ENCODE measurements at regions of chr22 and their contacts with region 1.

Region 1: DNA sequence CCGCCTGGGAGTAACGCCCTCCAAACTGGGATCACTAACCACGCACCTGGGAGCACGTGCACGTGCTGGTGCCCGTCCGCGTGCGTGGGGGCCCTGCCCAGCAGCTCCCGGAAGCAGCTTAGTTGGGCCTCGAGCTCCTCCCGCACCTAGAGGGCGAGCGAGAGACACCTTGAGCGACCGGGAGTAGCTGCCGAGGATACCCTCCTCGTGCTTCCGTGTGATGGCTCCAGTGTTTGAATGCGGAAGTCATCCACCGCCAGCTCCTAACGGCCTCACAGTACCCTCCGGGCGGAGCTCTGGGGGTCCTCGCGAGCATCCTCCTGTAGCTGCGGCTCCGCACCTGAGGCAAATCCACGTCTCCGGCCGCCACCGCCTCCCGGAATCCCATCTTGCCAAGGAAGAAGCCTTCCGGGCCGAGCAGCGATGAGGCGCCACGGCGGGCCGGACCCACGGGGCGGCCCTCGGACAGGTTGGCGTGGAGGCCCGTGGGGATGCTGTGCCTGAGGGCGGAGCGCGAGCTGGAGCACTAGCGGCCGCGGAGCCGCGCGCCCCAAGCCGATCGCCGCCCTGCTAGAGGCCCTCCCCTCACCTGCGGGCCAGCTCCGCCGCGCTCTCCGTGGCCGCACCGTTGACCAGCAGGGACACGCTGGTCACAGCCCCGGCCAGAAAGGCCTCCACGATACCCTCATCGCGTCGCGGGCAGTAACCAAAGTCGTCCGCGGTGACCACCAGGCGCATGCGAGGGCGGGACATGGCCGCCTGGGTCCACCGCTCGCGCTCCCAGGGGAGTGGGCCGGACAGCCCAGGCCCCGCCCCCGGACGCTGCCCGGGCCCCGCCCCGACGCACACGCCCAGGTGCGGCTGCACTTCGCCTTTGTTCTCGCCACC is at the start of gene YDJC:
- DNase-seq: peak; percentile 90 to 98 (median 94)
- ATAC-seq: peak; percentile 81
- H3K4me3 ChIP-seq: peak within 1 kb of the TSS; percentile 97
- H3K4me3 Mint-ChIP-seq: peak within 1 kb of the TSS; percentile 97
- H3K27ac ChIP-seq: peak within 1 kb of the TSS; percentile 87 to 96
- H3K27ac Mint-ChIP-seq: peak within 1 kb of the TSS; percentile 88
- H3K4me1 ChIP-seq: peaks cover 61% of the 10 kb centered on the region
- H3K4me1 Mint-ChIP-seq: peaks cover 50% of the 10 kb centered on the region
- H3K27me3 ChIP-seq: no peaks in the 10 kb centered on the region
- H3K27me3 Mint-ChIP-seq: no peaks in the 10 kb centered on the region
- CTCF ChIP-seq: no peak
- total RNA-seq, gene YDJC: 23.9 to 25.2 TPM

Region 2: DNA sequence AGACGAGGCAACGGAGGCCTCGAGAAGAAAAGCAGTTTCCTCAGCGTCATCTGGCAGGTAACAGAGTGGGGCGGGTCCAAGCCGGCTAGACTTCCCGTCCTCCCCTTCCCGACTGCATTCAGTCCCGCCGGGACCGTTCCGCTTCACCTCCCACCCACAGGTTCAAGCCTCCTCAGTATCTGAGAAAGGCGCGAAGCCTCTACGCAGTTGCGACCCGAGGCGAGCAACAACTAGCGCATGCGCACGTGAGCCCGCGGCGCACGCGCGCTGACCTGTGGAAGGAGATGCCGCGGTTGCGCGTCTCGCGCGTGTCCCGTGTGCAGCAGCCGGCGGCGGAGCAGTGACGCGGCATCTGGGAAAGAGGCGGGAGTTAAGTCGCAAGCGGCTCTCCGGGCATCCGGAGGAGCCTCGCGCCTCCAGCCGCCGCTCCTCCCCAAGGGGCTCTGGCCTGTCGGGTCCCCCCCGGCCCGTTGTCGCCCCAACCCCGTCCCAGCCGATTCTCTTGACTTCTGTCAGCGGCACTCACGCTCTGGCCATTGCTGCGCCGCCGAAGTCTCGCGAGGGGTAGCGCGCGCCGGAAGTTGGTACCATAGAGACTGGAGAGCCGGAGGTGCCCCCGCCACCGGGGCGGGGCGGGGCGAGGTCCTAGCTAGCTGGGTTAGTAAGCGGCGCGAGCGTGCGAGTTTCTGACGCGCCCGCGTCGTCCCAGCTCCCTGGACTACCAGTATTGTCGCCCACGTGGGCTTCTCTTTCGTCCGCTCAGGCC is 627.8 kb before region 1 on chr22 and contains the start of gene THAP7:
- CTCF ChIA-PET with region 1: interaction called, 4 read pairs
- POLR2A ChIA-PET with region 1: interaction called, 15 read pairs
- intact Hi-C with region 1: loop called in 1 of 2 experiments (anchors 5 kb)
- DNase-seq: peak; percentile 94 to 99 (median 96)
- ATAC-seq: peak; percentile 87
- H3K4me3 ChIP-seq: peak within 1 kb of the TSS; percentile 82
- H3K4me3 Mint-ChIP-seq: peak within 1 kb of the TSS; percentile 93
- H3K27ac ChIP-seq: peak within 1 kb of the TSS; percentile 96 to 100
- H3K27ac Mint-ChIP-seq: peak within 1 kb of the TSS; percentile 97
- H3K4me1 ChIP-seq: peaks cover 54% of the 10 kb centered on the region
- H3K4me1 Mint-ChIP-seq: peaks cover 46% of the 10 kb centered on the region
- H3K27me3 ChIP-seq: no peaks in the 10 kb centered on the region
- H3K27me3 Mint-ChIP-seq: no peaks in the 10 kb centered on the region
- CTCF ChIP-seq: no peak
- total RNA-seq, gene THAP7: 82.7 to 84.0 TPM

Region 3: GRCh38 chr22:21606775-21607174 is 22.7 kb before region 1 on chr22:
- CTCF ChIA-PET with region 1: interaction called, 11 read pairs
- POLR2A ChIA-PET with region 1: no interaction called
- intact Hi-C with region 1: no loop called
- DNase-seq: no peak
- ATAC-seq: no peak
- H3K4me3 ChIP-seq: no peak overlapping the region
- H3K4me3 Mint-ChIP-seq: no peak overlapping the region
- H3K27ac ChIP-seq: no peak overlapping the region
- H3K27ac Mint-ChIP-seq: peak overlapping the region; percentile 42
- H3K4me1 ChIP-seq: peaks cover 24% of the 10 kb centered on the region
- H3K4me1 Mint-ChIP-seq: peaks cover 46% of the 10 kb centered on the region
- H3K27me3 ChIP-seq: no peaks in the 10 kb centered on the region
- H3K27me3 Mint-ChIP-seq: no peaks in the 10 kb centered on the region
- CTCF ChIP-seq: no peak

Region 4: DNA sequence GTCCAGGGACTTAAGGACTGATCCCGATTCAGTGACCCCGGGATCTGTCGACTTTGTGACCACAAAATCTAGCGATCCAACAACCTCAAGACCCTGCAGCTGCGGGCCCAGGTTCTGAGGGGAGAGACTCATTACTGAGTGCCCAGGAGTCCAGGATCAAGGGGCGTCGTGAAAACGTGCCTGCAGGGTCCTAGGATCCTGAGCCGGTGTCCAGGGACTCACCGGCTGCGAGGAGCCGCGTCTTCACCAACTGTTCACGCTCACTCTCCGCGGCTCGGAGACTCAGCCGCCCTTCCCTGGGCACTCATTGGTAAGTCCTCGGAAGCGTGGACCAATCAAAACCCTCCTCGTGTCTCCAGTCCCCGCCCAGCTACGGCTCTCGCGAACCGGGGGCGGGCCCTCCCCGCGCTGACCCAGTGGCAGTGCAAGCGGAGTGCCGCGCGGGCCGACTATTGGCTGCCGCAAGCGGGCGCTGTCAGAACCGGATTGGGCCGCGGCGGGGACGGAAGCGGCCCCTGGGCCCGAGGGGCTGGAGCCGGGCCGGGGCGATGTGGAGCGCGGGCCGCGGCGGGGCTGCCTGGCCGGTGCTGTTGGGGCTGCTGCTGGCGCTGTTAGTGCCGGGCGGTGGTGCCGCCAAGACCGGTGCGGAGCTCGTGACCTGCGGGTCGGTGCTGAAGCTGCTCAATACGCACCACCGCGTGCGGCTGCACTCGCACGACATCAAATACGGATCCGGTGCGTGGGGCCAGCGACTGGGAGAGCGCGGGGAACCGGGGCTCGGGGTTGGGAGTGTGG is 12.5 kb after region 1 on chr22 and contains the start of gene SDF2L1:
- CTCF ChIA-PET with region 1: interaction called, 89 read pairs
- POLR2A ChIA-PET with region 1: interaction called, 140 read pairs
- intact Hi-C with region 1: loop called (anchors 1 to 2 kb)
- DNase-seq: peak; percentile 94 to 99 (median 97)
- ATAC-seq: peak; percentile 96
- H3K4me3 ChIP-seq: peak within 1 kb of the TSS; percentile 87
- H3K4me3 Mint-ChIP-seq: peak within 1 kb of the TSS; percentile 73
- H3K27ac ChIP-seq: peak within 1 kb of the TSS; percentile 52 to 67
- H3K27ac Mint-ChIP-seq: peak within 1 kb of the TSS; percentile 42
- H3K4me1 ChIP-seq: peaks cover 32% of the 10 kb centered on the region
- H3K4me1 Mint-ChIP-seq: peaks cover 32% of the 10 kb centered on the region
- H3K27me3 ChIP-seq: no peaks in the 10 kb centered on the region
- H3K27me3 Mint-ChIP-seq: no peaks in the 10 kb centered on the region
- CTCF ChIP-seq: no peak
- total RNA-seq, gene SDF2L1: 20.0 to 21.2 TPM

Region 5: DNA sequence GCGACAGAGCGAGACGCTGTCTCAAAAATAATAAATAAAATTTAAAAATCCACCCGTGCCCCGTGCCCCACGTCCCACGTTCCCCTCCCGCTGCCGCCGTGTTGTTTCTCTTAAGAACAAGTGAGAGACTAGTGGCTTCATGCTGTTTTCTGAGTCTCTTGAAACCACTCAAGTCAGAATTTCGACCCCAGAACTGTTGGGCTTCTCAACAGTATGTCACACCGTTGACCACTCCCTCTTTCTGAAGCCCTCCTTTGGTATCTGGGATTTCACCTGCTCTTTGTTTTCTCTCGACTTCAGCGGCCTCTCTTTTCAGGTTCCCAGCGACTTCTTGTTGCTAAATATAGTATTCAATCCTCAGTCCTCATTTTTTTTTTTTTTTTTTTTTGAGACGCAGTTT is 37.3 kb after region 1 on chr22:
- CTCF ChIA-PET with region 1: interaction called, 4 read pairs
- POLR2A ChIA-PET with region 1: interaction called, 14 read pairs
- intact Hi-C with region 1: loop called in 1 of 2 experiments (anchors 1 kb)
- DNase-seq: no peak
- ATAC-seq: no peak
- H3K4me3 ChIP-seq: peak overlapping the region; percentile 95
- H3K4me3 Mint-ChIP-seq: peak overlapping the region; percentile 99
- H3K27ac ChIP-seq: no peak overlapping the region
- H3K27ac Mint-ChIP-seq: peak overlapping the region; percentile 92
- H3K4me1 ChIP-seq: peaks cover 30% of the 10 kb centered on the region
- H3K4me1 Mint-ChIP-seq: peaks cover 32% of the 10 kb centered on the region
- H3K27me3 ChIP-seq: no peaks in the 10 kb centered on the region
- H3K27me3 Mint-ChIP-seq: no peaks in the 10 kb centered on the region
- CTCF ChIP-seq: no peak